ENCODE measurements at regions of chr3 and their contacts with region 1.

Region 1: GRCh38 chr3:178170698-178171535 is 365.3 kb upstream of the KCNMB2 start:
- DNase-seq: peak; percentile 96
- H3K4me3 ChIP-seq: no peak overlapping the region
- H3K27ac ChIP-seq: peak overlapping the region; percentile 85
- H3K4me1 ChIP-seq: peaks cover 27% of the 10 kb centered on the region
- H3K27me3 ChIP-seq: no peaks in the 10 kb centered on the region
- CTCF ChIP-seq: no peak
- POLR2A ChIP-seq: peak; percentile 91

Region 2: DNA sequence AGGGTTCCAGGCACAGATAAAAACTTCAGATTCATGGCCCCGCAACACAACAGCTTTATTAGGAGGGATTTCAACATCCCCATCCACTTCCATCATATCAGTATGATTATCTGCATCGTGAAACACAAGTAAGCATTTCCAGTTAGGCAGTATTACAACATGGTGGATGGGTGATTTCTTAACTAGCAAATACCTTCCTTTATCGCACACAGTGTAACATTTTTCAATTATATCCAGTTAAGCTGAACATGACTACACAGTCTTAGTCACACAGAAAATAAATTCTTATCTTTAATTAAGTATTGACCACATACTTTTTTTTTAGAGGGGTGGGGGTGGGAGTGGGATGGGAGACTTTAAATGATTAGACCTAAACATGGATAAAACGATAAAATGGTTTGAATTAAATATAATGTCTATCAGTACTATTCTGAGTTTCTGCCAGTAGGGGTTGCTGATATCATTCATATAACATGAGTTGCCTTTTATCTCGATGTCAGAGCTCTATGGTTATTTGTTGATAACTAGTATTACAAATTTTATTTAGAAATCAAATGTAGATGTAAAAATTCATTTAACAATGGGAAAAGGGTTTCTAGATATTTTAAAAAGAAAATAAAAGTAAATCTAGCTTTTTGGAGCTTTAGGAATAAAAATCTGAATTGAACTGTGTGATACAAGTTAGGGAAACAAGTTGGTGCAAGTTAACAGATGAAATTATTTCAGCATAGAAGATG is 1120.2 kb before region 1 on chr3:
- CTCF ChIA-PET with region 1: interaction called, 6 read pairs
- POLR2A ChIA-PET with region 1: no interaction called
- dilution Hi-C with region 1: no loop called
- intact Hi-C with region 1: loop called (anchors 10 kb)
- DNase-seq: peak; percentile 71
- H3K4me3 ChIP-seq: no peak overlapping the region
- H3K27ac ChIP-seq: no peak overlapping the region
- H3K4me1 ChIP-seq: no peaks in the 10 kb centered on the region
- H3K27me3 ChIP-seq: no peaks in the 10 kb centered on the region
- CTCF ChIP-seq: no peak
- POLR2A ChIP-seq: no peak

Region 3: GRCh38 chr3:177679568-177680441 is 491.1 kb before region 1 on chr3:
- CTCF ChIA-PET with region 1: no interaction called
- POLR2A ChIA-PET with region 1: no interaction called
- dilution Hi-C with region 1: no loop called
- intact Hi-C with region 1: loop called (anchors 5 kb)
- DNase-seq: peak; percentile 76
- H3K4me3 ChIP-seq: no peak overlapping the region
- H3K27ac ChIP-seq: peak overlapping the region; percentile 72
- H3K4me1 ChIP-seq: peaks cover 45% of the 10 kb centered on the region
- H3K27me3 ChIP-seq: no peaks in the 10 kb centered on the region
- CTCF ChIP-seq: no peak
- POLR2A ChIP-seq: no peak

Region 4: DNA sequence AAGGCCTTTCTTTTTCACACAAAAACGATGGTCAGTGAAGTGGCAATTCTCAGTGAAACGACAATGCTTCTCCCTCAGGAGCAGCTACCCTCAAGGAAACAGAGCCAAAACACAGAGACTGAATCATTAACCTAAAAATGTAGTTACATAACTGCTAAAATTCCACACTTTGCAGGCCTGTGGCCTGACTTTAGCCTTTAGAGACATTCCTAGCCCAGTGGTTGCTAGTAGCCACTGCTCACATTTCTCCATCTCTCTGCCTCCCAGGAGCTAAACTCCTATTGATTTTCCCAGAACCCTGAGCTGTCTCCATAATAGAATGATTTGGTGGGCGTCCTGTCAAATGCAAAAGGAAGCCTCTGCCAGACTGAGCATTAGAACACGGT is 264.8 kb before region 1 on chr3:
- CTCF ChIA-PET with region 1: no interaction called
- POLR2A ChIA-PET with region 1: no interaction called
- dilution Hi-C with region 1: no loop called
- intact Hi-C with region 1: no loop called
- DNase-seq: peak; percentile 12
- H3K4me3 ChIP-seq: no peak overlapping the region
- H3K27ac ChIP-seq: no peak overlapping the region
- H3K4me1 ChIP-seq: no peaks in the 10 kb centered on the region
- H3K27me3 ChIP-seq: no peaks in the 10 kb centered on the region
- CTCF ChIP-seq: no peak
- POLR2A ChIP-seq: no peak

Region 5: DNA sequence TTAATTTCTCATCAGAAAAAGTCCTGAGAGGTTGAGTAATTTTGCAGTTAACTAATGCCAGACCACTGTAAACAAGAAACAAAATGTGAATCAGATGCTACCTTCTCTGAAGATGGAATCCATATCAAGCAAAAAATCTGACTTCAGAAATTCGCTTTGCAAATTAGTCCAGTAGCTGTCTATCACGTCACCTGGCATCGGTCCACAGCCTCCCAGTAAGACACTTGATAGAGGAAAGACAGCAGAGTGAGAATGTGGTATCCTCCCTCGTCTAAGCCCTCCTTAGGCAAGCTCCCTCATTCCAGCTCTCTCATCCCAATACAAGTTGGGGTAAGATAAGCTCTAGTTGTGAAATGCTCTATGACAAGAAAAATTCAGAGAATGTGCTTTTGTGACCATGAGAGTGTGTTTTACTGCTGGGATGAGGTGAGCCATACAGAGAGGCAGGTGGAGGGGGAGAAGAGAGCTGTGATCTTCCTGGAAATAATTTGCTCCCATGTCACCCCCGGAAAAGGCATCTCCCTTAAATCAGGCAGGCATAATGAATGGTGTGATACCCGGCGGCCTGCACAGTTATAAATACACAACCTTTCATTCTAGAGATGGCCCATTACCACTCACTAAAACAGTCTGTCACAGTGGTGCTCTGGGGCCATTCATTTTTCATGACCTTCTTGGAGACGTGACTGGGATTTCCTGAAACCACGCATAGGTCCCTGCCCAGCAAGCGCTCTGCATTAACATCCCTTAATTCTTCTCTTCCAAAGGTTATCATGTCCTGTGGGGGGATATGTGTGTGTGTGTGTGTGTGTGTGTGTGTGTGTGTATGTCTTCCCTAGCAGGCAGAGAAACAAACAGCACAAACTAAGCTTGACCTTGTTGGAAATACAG is 236.7 kb before region 1 on chr3:
- CTCF ChIA-PET with region 1: no interaction called
- POLR2A ChIA-PET with region 1: no interaction called
- dilution Hi-C with region 1: no loop called
- intact Hi-C with region 1: loop called (anchors 1 kb)
- DNase-seq: peak; percentile 12
- H3K4me3 ChIP-seq: no peak overlapping the region
- H3K27ac ChIP-seq: no peak overlapping the region
- H3K4me1 ChIP-seq: peaks cover 21% of the 10 kb centered on the region
- H3K27me3 ChIP-seq: no peaks in the 10 kb centered on the region
- CTCF ChIP-seq: no peak
- POLR2A ChIP-seq: no peak

Region 6: DNA sequence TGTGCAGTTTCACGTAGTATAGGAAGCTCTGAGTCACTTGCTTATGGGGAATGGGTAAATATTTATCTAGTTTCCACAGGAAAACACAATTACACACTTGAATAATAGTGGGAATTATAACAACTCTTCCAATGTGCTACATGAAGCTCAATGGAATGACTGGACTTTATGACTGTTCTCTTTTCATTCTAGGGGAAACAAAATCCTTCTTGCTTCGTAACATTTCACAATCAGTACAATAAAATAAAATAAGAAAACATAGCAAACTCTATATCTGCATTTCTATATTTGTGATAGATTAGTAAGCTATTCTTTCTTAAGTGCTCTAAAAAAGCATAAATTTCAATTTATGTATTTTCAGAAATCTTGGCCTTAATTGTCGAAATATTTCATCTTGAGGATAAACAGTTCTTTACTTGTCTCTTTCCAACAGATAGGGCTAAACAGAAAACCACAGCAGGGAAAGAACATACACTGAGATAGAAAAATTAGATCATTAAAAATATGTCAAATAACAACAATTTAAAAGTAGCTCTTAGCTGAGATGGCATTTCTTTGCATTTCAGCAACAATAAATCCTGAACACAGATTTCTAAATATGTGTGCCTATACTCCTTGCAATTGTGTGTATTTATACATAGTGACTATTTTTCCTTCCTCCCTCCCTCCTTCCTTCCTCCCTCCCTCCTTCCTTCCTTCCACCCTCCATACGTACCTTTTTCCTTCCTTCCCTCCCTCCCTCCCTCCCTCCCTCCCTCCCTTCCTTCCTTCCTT is 30.2 kb before region 1 on chr3:
- CTCF ChIA-PET with region 1: no interaction called
- POLR2A ChIA-PET with region 1: no interaction called
- dilution Hi-C with region 1: no loop called
- intact Hi-C with region 1: loop called (anchors 1 kb)
- DNase-seq: peak; percentile 74
- H3K4me3 ChIP-seq: no peak overlapping the region
- H3K27ac ChIP-seq: peak overlapping the region; percentile 60
- H3K4me1 ChIP-seq: peaks cover 10% of the 10 kb centered on the region
- H3K27me3 ChIP-seq: no peaks in the 10 kb centered on the region
- CTCF ChIP-seq: no peak
- POLR2A ChIP-seq: no peak

Region 7: GRCh38 chr3:178255315-178255714 is 84.4 kb after region 1 on chr3:
- CTCF ChIA-PET with region 1: interaction called, 3 read pairs
- POLR2A ChIA-PET with region 1: no interaction called
- dilution Hi-C with region 1: no loop called
- intact Hi-C with region 1: loop called (anchors 1 kb)
- DNase-seq: peak; percentile 98
- H3K4me3 ChIP-seq: no peak overlapping the region
- H3K27ac ChIP-seq: peak overlapping the region; percentile 62
- H3K4me1 ChIP-seq: peaks cover 15% of the 10 kb centered on the region
- H3K27me3 ChIP-seq: no peaks in the 10 kb centered on the region
- CTCF ChIP-seq: no peak
- POLR2A ChIP-seq: peak; percentile 49

Region 8: DNA sequence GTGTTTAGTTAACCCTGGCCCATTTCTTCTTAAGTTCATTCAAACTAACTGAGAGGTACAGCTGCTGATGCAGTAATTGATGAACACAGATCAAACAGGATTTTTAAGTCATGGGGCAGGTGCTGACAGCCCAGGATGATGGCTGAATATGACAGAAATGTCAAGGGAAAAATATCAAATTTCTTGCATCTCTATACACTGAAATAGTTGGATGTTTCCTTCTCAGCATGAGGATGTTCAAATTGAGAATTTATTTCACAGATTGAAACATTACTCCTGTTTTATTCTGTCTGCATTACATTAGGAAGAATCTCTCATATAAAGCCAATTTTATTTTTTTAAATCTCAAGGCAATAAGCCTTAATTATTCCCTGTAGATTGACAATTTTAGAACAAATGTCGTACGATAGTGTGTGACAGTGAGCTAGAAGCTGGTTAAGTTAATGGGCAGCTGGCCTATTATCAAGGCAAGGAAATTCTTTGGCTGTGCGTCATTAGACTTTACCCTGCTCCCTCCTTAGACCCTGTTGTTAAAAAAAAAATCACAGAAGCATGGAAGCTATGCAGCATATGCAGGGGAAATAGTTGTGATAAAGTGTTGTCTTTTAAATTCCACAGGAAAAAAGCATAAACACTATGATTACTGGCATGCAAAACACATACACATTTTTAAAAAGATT is 181.5 kb after region 1 on chr3:
- CTCF ChIA-PET with region 1: no interaction called
- POLR2A ChIA-PET with region 1: no interaction called
- dilution Hi-C with region 1: no loop called
- intact Hi-C with region 1: loop called (anchors 1 kb)
- DNase-seq: peak; percentile 90
- H3K4me3 ChIP-seq: no peak overlapping the region
- H3K27ac ChIP-seq: peak overlapping the region; percentile 89
- H3K4me1 ChIP-seq: peaks cover 21% of the 10 kb centered on the region
- H3K27me3 ChIP-seq: no peaks in the 10 kb centered on the region
- CTCF ChIP-seq: no peak
- POLR2A ChIP-seq: no peak